ENCODE measurements at regions of chr3 and their contacts with region 1.

Region 1: GRCh38 chr3:63981980-63982379 is 41.3 kb downstream of the PSMD6 start:
- DNase-seq: no peak
- H3K4me3 Mint-ChIP-seq: no peak overlapping the region
- H3K27ac Mint-ChIP-seq: peak overlapping the region; percentile 33
- H3K4me1 Mint-ChIP-seq: peaks cover 85% of the 10 kb centered on the region
- H3K27me3 Mint-ChIP-seq: no peaks in the 10 kb centered on the region

Region 2: DNA sequence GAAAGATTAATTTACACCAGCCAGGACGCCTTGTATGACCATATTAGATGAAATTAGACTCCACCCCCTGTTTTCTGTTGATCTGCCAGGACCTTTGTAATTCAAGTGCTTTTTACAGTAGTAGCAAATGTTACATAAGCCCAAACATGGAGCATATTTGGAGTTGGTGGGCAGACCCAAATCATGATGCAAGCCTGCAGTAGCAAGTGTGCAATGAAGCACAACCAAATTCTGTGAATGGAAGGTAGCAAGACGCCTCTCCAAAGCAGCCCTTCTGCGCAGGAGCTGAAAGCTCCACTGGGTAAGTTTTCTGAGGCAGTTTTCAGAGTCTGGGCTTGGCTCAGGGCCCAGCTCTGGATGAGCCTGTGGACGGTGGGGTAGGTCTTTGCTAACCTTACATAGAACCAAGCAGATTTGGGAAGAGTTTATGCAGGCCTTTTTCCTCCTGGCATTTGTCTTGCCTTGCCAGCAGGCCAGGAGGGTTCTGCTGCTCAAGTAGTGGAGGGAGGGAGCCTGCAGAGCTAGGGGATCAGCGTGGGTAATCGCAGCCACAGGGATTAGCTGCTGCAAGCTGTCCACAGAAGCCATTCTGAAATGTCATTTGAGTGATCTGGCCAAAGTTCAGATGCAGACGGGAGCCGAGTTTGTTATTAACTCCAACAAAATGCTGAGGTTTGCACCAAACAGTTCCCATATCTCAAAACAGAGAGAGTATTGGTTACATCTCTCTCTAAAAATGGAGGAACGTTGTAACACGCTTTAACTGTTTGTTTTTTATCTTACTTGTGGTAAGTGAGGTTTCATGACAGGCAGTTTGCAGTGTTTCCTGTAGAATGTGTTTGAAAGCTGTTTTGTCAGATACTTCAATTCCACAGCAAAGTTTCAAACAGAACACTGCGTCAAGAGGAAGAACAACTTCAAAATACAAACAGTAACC is 14.0 kb before region 1 on chr3:
- CTCF ChIA-PET with region 1: interaction called, 201 read pairs
- POLR2A ChIA-PET with region 1: interaction called, 249 read pairs
- DNase-seq: peak; percentile 49
- H3K4me3 Mint-ChIP-seq: peak overlapping the region; percentile 80
- H3K27ac Mint-ChIP-seq: peak overlapping the region; percentile 98
- H3K4me1 Mint-ChIP-seq: peaks cover 87% of the 10 kb centered on the region
- H3K27me3 Mint-ChIP-seq: no peaks in the 10 kb centered on the region

Region 3: DNA sequence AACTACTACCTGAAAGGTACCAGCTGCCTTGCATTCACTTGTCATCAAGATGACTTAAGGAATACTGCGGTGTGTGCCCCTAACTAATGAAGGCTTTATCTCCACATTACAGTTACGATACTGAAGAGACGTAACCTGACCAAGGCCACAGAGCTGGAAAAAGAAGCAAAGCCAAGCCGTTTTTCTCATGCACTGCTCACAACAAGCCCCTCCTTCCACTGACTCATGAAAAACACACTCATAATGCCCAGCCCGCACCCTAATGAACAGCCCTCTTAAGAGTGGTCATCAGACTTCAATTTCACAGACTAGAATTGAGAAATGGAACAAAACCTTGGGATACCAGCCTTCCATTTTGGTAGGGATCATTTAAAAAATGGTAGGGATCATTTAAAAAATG is 29.7 kb after region 1 on chr3:
- CTCF ChIA-PET with region 1: interaction called, 8 read pairs
- POLR2A ChIA-PET with region 1: interaction called, 17 read pairs
- DNase-seq: no peak
- H3K4me3 Mint-ChIP-seq: no peak overlapping the region
- H3K27ac Mint-ChIP-seq: no peak overlapping the region
- H3K4me1 Mint-ChIP-seq: peaks cover 46% of the 10 kb centered on the region
- H3K27me3 Mint-ChIP-seq: no peaks in the 10 kb centered on the region

Region 4: GRCh38 chr3:64084640-64085039 is 102.7 kb after region 1 on chr3:
- CTCF ChIA-PET with region 1: no interaction called
- POLR2A ChIA-PET with region 1: no interaction called
- DNase-seq: no peak
- H3K4me3 Mint-ChIP-seq: no peak overlapping the region
- H3K27ac Mint-ChIP-seq: no peak overlapping the region
- H3K4me1 Mint-ChIP-seq: no peaks in the 10 kb centered on the region
- H3K27me3 Mint-ChIP-seq: peaks cover 5% of the 10 kb centered on the region